Panc1 (cell line): ENCODE measurements at regions of chr1 and their contacts with region 1.

Region 1: GRCh38 chr1:53703174-53703573 is 35.8 kb downstream of the GLIS1 start:
- DNase-seq: no peak
- ATAC-seq: no peak
- H3K4me3 ChIP-seq: no peak overlapping the region
- H3K27ac ChIP-seq: no peak overlapping the region
- H3K4me1 ChIP-seq: no peaks in the 10 kb centered on the region
- H3K27me3 ChIP-seq: no peaks in the 10 kb centered on the region
- CTCF ChIP-seq: no peak

Region 2: GRCh38 chr1:54047384-54048305 is 344.5 kb after region 1 on chr1:
- CTCF ChIA-PET with region 1: no interaction called
- POLR2A ChIA-PET with region 1: interaction called, 21 read pairs
- in situ Hi-C with region 1: no loop called
- intact Hi-C with region 1: no loop called
- DNase-seq: no peak
- ATAC-seq: no peak
- H3K4me3 ChIP-seq: no peak overlapping the region
- H3K27ac ChIP-seq: no peak overlapping the region
- H3K4me1 ChIP-seq: peaks cover 28% of the 10 kb centered on the region
- H3K27me3 ChIP-seq: no peaks in the 10 kb centered on the region
- CTCF ChIP-seq: no peak

Region 3: DNA sequence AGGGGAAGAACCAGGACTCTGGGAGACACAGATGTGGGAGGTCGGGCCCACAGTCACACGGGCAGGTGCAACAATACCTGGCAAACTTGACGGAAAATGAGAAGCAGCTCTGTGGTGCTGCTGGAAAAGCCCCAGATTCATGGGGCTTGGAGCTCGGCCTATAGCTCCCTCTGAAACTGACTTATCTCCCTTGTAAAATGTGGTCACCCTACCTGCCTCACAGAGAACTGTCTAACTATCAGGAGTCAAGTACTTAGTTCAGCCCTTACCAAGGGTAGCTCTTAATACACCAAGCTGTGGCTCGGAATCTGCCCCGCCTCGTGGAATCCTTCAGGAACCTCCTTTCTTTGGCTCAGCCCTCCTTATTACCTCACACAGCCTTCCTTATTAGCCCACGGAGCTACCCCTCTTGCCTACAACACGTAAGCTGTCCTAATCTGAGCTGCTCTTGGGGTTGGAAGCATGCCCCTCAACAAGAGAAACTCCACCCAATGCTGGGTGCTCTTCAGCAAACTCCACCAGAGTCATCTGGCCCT is 565.7 kb after region 1 on chr1:
- CTCF ChIA-PET with region 1: no interaction called
- POLR2A ChIA-PET with region 1: no interaction called
- in situ Hi-C with region 1: no loop called
- intact Hi-C with region 1: no loop called
- DNase-seq: no peak
- ATAC-seq: no peak
- H3K4me3 ChIP-seq: no peak overlapping the region
- H3K27ac ChIP-seq: no peak overlapping the region
- H3K4me1 ChIP-seq: peaks cover 3% of the 10 kb centered on the region; the same call in 1 of the 2 replicates
- H3K27me3 ChIP-seq: no peaks in the 10 kb centered on the region
- CTCF ChIP-seq: no peak